Aorta (tissue), 5 donors: ENCODE measurements at regions of chr13 and their contacts with region 1.

Region 1: DNA sequence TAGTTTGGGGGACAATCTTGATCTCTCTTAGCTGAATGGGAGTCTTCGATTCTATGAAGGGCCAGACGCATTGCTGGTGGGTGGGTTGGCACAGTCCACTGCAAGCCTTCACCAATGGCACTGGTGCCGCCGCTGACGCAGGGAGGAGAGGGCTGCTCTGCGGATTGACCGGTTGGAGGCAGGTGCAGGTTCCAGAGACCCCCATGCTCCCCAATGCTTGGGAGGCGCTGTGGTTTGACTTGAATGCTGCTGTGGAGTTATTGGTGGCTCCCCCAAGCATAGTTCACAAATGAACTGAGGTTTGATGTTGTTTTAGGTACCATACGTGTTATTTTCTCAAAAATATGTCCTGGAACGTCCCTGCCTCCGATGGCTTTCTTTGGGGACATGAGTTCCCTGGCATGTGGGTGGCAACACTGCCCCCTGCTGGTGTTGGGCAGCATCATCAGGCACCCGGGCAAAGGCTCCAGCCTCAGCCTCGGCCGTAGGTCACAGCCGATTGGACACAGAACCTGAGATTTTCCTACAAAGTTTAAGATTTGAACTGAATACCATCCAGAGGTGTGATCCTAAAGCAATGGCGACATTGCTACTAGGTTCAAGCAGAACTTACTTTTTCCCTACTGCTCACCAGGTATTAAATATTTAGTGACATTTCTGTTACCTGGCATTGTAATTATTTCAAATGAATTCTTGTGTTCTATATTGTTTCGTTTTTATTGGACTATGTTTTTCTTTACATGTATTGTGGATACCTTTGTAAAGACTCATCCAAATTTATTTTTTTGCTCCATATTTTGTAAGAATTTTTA is 95.5 kb downstream of the ANKRD10 start:
- DNase-seq: peak; percentile 84 to 93
- ATAC-seq: peak; percentile 93
- H3K4me3 ChIP-seq: no peak overlapping the region
- H3K27ac ChIP-seq: no peak overlapping the region
- H3K4me1 ChIP-seq: no peaks in the 10 kb centered on the region
- H3K27me3 ChIP-seq: no peaks in the 10 kb centered on the region

Region 2: GRCh38 chr13:110593430-110594130 is 225.8 kb before region 1 on chr13:
- intact Hi-C with region 1: loop called (anchors 5 kb)
- DNase-seq: no peak
- ATAC-seq: peak; percentile 86
- H3K4me3 ChIP-seq: no peak overlapping the region
- H3K27ac ChIP-seq: no peak overlapping the region
- H3K4me1 ChIP-seq: no peaks in the 10 kb centered on the region
- H3K27me3 ChIP-seq: no peaks in the 10 kb centered on the region

Region 3: GRCh38 chr13:110683203-110683883 is 136.1 kb before region 1 on chr13:
- intact Hi-C with region 1: loop called in 1 of 2 experiments (anchors 2 kb)
- DNase-seq: no peak
- ATAC-seq: no peak
- H3K4me3 ChIP-seq: no peak overlapping the region
- H3K27ac ChIP-seq: no peak overlapping the region
- H3K4me1 ChIP-seq: no peaks in the 10 kb centered on the region
- H3K27me3 ChIP-seq: no peaks in the 10 kb centered on the region

Region 4: DNA sequence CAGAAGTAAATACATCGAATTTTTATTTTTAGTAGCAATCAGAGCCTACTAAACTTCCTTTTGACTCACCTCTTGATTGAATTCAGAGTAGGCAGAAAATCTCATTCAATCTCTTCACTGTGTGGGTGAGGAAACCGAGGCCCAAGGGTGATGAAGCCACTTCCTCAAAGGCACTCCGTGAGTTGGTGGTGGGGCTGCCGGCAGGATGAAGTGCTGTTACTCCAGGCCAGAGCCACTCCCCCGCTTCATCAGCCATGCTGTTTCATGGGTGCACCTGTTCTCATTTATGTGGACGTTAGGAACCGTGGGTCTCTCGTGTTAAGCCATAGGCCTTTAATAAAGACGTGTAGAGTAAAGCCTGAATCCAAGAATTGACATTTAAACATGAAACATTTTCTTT is 92.7 kb before region 1 on chr13:
- intact Hi-C with region 1: loop called in 1 of 2 experiments (anchors 10 kb)
- DNase-seq: no peak
- ATAC-seq: no peak
- H3K4me3 ChIP-seq: no peak overlapping the region
- H3K27ac ChIP-seq: no peak overlapping the region
- H3K4me1 ChIP-seq: no peaks in the 10 kb centered on the region
- H3K27me3 ChIP-seq: no peaks in the 10 kb centered on the region

Region 5: GRCh38 chr13:111031531-111031961 is 212.1 kb after region 1 on chr13:
- intact Hi-C with region 1: no loop called
- DNase-seq: no peak
- ATAC-seq: no peak
- H3K4me3 ChIP-seq: no peak overlapping the region
- H3K27ac ChIP-seq: no peak overlapping the region
- H3K4me1 ChIP-seq: no peaks in the 10 kb centered on the region
- H3K27me3 ChIP-seq: no peaks in the 10 kb centered on the region

Region 6: GRCh38 chr13:112783135-112783977 is 1963.9 kb after region 1 on chr13:
- intact Hi-C with region 1: no loop called
- DNase-seq: peak in 1 of 2 donors; percentile 77
- ATAC-seq: peak; percentile 41
- H3K4me3 ChIP-seq: no peak overlapping the region
- H3K27ac ChIP-seq: no peak overlapping the region
- H3K4me1 ChIP-seq: no peaks in the 10 kb centered on the region
- H3K27me3 ChIP-seq: no peaks in the 10 kb centered on the region